HepG2 (cell line): ENCODE measurements at regions of chr2 and their contacts with region 1.

Region 1: DNA sequence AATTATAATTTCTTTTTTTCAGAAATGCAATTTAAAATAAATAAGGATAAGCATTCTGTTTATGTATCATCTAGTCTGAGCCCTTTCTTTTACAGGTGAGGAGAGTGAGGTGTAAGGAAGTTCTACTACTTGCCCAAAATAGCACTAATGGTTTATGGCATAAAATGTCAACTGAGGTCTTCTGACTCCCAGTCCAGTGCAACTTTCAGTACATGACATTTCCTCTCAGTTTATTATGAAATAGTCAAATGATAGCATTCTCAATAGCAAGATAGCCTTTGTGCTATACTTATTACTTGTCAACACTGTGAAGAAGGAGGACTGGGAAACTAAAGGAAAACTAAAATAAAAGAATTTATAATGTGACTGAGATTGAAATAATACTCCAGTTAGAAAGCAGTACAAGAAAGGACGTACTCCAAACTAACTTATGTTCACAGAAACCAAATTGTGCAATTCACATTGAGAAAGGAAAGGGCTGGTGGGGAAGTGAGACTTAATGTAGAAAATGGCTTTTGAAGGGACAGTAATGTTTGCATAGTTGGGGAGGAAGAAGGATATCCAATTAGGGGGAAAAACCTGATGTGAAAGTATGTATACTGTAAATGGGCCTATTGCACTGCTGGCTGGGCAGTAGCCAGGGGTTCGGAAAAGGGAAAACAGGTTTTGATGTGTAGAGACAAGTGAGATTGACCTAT is 166.7 kb upstream of the ZEB2 start:
- DNase-seq: no peak
- ATAC-seq: no peak
- H3K4me3 ChIP-seq: no peak overlapping the region
- H3K27ac ChIP-seq: no peak overlapping the region
- H3K4me1 ChIP-seq: no peaks in the 10 kb centered on the region
- H3K27me3 ChIP-seq: no peaks in the 10 kb centered on the region
- CTCF ChIP-seq: no peak
- EP300 ChIP-seq: no peak
- POLR2A ChIP-seq: no peak
- RAD21 ChIP-seq: no peak

Region 2: GRCh38 chr2:143994961-143995360 is 691.7 kb before region 1 on chr2:
- CTCF ChIA-PET with region 1: no interaction called
- POLR2A ChIA-PET with region 1: no interaction called
- in situ Hi-C with region 1: no loop called
- intact Hi-C with region 1: no loop called
- DNase-seq: no peak
- ATAC-seq: no peak
- H3K4me3 ChIP-seq: no peak overlapping the region
- H3K27ac ChIP-seq: no peak overlapping the region
- H3K4me1 ChIP-seq: peaks cover 13% of the 10 kb centered on the region
- H3K27me3 ChIP-seq: no peaks in the 10 kb centered on the region
- CTCF ChIP-seq: no peak
- EP300 ChIP-seq: no peak
- POLR2A ChIP-seq: no peak
- RAD21 ChIP-seq: no peak

Region 3: GRCh38 chr2:145166731-145167302 is 480.1 kb after region 1 on chr2:
- CTCF ChIA-PET with region 1: no interaction called
- POLR2A ChIA-PET with region 1: no interaction called
- in situ Hi-C with region 1: no loop called
- intact Hi-C with region 1: loop called (anchors 5 kb)
- DNase-seq: no peak
- ATAC-seq: no peak
- H3K4me3 ChIP-seq: no peak overlapping the region
- H3K27ac ChIP-seq: no peak overlapping the region
- H3K4me1 ChIP-seq: no peaks in the 10 kb centered on the region
- H3K27me3 ChIP-seq: no peaks in the 10 kb centered on the region; a peak in 1 of 5 replicates
- CTCF ChIP-seq: no peak
- EP300 ChIP-seq: no peak
- POLR2A ChIP-seq: no peak
- RAD21 ChIP-seq: no peak